SK-N-SH (cell line): ENCODE measurements at regions of chrX and their contacts with region 1.

Region 1: DNA sequence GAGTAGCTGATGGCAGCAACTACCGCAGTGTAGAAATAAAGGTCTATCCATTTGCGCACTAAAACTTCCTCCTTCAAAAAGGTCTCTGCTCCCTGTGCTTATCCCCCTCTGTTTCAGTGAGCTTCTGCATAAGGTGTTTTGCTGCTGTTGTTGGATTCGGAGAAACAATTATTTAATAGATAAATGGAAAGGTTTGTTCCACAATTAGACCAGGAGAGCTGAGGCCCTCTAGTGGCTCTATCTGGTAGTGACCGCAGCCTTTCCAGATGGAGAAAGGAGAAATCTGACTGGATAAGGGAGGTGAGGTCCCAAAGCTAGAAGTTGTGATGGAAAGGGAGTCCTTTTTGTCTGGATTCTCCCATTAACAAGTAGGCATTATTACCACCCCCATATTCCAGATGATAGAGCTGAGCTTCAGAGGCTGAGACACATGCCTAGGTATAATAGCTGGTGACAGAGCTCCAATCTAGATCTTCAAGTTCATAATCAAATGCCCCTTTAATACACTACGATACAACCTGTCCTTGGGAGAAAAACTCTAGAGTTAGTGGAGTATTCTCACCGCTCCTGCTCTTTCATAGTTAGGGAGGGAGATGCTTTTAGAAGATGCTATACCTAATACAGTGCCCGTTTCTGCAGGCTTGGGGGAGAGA is 5.1 kb upstream of the GABRQ start:
- DNase-seq: peak; percentile 49
- H3K4me3 ChIP-seq: no peak overlapping the region
- H3K27ac ChIP-seq: no peak overlapping the region
- H3K4me1 ChIP-seq: no peaks in the 10 kb centered on the region; a peak in 1 of 4 replicates
- H3K27me3 ChIP-seq: no peaks in the 10 kb centered on the region
- CTCF ChIP-seq: peak; percentile 92
- EP300 ChIP-seq: no peak
- RAD21 ChIP-seq: peak; percentile 73

Region 2: GRCh38 chrX:151753313-151754041 is 879.1 kb before region 1 on chrX:
- CTCF ChIA-PET with region 1: interaction called, 55 read pairs
- POLR2A ChIA-PET with region 1: no interaction called
- DNase-seq: peak; percentile 64
- H3K4me3 ChIP-seq: peak overlapping the region in 1 of 2 experiments; percentile 13; a peak in 1 of 4 replicates
- H3K27ac ChIP-seq: no peak overlapping the region
- H3K4me1 ChIP-seq: no peaks in the 10 kb centered on the region
- H3K27me3 ChIP-seq: peaks cover 35% of the 10 kb centered on the region; the same call in 1 of the 2 replicates
- CTCF ChIP-seq: peak; percentile 86
- EP300 ChIP-seq: no peak
- RAD21 ChIP-seq: peak; percentile 74

Region 3: DNA sequence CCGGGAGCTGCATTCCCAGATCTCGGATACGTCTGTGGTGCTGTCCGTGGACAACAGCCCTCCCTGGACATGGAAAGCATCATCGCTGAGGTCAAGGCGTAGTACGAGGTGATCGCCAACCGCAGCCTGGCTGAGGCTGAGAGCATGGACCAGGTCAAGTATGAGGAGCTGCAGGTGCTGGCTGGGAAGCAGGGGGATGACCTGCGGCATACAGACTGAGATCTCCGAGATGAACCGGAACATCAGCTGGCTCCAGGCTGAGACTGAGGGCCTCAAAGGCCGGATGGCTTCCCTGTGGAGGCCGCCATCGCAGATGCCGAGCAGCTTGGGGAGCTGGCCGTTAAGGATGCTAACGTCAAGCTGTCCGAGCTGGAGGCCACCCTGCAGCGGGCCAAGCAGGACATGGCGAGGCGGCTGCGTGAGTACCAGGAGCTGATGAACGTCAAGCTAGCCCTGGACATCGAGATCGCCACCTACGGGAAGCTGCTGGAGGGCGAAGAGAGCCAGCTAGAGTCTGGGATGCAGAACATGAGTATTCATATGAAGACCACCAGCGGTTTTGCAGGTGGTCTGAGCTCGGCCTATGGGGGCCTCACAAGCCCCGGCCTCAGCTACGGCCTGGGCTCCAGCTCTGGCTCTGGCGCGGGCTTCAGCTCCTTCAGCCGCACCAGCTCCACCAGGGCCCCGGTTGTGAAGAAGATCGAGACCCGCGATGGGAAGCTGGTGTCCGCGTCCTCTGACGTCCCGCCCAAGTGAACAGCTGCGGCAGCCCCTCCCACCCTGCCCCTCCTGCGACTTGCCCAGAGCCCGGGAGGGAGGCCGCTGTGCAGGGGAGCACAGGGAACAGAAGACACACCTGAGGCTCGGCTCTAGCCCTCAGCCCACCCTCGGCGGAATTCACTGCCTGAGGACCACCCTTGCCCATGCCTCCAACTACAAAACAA is 152.0 kb before region 1 on chrX:
- CTCF ChIA-PET with region 1: no interaction called
- POLR2A ChIA-PET with region 1: no interaction called
- DNase-seq: no peak
- H3K4me3 ChIP-seq: no peak overlapping the region
- H3K27ac ChIP-seq: no peak overlapping the region
- H3K4me1 ChIP-seq: no peaks in the 10 kb centered on the region
- H3K27me3 ChIP-seq: no peaks in the 10 kb centered on the region
- CTCF ChIP-seq: no peak
- EP300 ChIP-seq: no peak
- RAD21 ChIP-seq: no peak

Region 4: DNA sequence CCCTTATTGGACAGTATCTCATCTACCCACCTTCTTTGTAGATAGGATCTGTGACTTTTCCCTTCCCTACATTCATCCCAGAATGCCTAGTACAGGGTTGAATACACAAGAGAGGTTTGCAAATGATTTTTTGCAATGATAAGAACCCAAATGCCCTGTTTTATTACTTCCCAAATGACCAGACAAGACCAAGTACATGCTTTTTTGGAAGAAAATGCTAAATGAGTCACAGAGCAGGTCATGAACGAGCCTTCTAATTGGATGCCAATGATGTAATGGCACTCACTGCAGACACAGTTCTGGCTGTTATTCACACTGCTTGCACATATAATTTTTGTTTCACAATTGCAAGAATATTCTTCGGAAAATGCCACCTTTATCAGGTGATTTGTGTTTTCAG is 12.7 kb before region 1 on chrX:
- CTCF ChIA-PET with region 1: interaction called, 27 read pairs
- POLR2A ChIA-PET with region 1: no interaction called
- DNase-seq: no peak
- H3K4me3 ChIP-seq: no peak overlapping the region
- H3K27ac ChIP-seq: no peak overlapping the region
- H3K4me1 ChIP-seq: no peaks in the 10 kb centered on the region
- H3K27me3 ChIP-seq: no peaks in the 10 kb centered on the region
- CTCF ChIP-seq: no peak
- EP300 ChIP-seq: no peak
- RAD21 ChIP-seq: no peak

Region 5: GRCh38 chrX:152810403-152810802 is 177.8 kb after region 1 on chrX:
- CTCF ChIA-PET with region 1: interaction called, 12 read pairs
- POLR2A ChIA-PET with region 1: no interaction called
- DNase-seq: peak; percentile 64
- H3K4me3 ChIP-seq: no peak overlapping the region
- H3K27ac ChIP-seq: no peak overlapping the region
- H3K4me1 ChIP-seq: peaks cover 0 to 10% of the 10 kb centered on the region in 2 experiments; a peak in 2 of 4 replicates
- H3K27me3 ChIP-seq: no peaks in the 10 kb centered on the region
- CTCF ChIP-seq: no peak
- EP300 ChIP-seq: no peak
- RAD21 ChIP-seq: no peak